AG04450 (cell line): ENCODE measurements at regions of chr4 and their contacts with region 1.

Region 1: DNA sequence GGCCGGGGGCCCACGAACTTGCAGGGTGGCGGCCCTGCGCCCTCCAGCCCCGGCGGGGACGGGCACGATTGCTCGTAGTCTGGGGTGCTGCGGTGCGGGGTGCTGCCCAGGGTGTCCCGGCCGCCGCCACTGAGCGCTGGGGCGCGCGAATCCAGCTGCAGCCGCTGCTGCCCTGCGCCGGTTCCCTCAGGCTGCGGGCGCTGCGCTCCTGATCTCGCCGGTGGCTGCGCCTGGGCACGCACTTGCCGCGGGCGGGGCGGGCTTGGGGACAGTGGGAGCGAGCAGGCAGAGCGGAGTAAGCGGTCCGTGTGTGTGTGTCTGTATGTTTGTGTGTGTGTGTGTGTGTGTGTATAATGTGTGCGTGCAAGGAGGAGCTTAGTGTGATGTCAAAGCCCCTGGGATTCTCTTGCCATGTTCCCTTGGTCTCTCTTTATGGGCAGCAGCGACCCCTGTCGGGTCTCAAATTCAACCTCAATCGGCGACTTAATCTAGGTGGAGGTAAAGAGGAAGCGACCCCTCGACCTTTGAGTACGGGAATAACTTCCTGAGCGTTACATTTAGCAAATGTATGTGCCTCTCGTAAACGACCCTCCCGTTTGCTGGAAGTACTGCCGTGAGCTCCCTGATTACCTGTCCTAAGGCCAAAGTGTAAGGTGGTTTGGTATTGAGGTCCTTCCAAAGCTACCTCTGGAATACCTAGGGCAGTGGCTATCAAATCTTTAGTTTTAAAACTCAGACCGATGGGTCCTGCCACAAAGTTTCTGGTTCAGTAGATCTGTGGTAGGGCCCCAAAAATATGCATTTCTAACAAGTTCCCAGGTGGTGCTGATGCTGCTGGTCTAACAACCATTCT is at the start of gene RNF150:
- DNase-seq: peak; percentile 78
- H3K4me3 ChIP-seq: peak within 1 kb of the TSS; percentile 82
- H3K27ac ChIP-seq: no peak within 1 kb of the TSS
- H3K27me3 ChIP-seq: no peaks in the 10 kb centered on the region
- CTCF ChIP-seq: peak; percentile 87
- polyA plus RNA-seq, gene RNF150: 9.8 and 10.3 TPM in 2 replicates

Region 2: GRCh38 chr4:140579278-140579677 is 554.1 kb before region 1 on chr4:
- CTCF ChIA-PET with region 1: no interaction called
- POLR2A ChIA-PET with region 1: no interaction called
- DNase-seq: no peak
- H3K4me3 ChIP-seq: no peak overlapping the region
- H3K27ac ChIP-seq: no peak overlapping the region
- H3K27me3 ChIP-seq: peaks cover 31% of the 10 kb centered on the region
- CTCF ChIP-seq: no peak

Region 3: DNA sequence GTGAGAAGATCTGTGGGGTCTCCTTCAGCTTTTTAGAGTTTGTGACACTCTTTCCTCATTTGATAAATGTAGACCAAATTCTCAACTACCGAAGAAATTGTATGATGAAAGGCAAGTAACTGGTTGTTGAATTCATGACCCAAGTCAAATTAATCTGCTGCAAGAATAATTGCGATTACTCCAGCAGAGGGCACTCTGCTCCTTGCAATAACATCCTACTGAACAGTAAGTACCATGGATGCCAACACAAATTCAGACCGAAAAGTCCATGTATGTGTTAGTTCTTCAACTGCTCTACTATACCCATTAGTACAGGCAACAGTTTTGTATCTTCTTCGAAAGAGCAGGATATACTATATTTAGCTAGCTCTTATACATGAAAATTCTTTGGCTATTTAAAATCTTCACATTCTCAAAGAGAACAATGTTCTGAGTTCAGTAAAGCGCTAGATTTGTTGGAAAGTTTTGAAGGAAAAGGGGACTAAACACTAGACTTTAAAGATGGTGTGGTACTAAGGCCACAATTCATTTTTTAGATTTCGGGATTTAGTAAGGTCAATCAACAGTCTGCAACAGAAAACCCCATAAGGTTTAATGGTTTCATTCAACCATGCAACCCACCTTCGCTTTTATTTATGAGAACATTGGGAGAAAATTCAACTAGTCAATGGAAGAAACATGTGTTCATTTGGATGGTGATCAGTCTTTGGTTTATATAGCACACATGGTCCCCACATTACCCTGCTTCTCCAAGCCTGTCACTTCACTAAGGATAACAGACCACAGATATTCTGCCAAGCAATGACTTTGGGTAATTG is 271.8 kb before region 1 on chr4:
- CTCF ChIA-PET with region 1: interaction called, 171 read pairs
- POLR2A ChIA-PET with region 1: interaction called, 3 read pairs
- DNase-seq: peak; percentile 80
- H3K4me3 ChIP-seq: no peak overlapping the region
- H3K27ac ChIP-seq: no peak overlapping the region
- H3K27me3 ChIP-seq: no peaks in the 10 kb centered on the region
- CTCF ChIP-seq: peak; percentile 82

Region 4: DNA sequence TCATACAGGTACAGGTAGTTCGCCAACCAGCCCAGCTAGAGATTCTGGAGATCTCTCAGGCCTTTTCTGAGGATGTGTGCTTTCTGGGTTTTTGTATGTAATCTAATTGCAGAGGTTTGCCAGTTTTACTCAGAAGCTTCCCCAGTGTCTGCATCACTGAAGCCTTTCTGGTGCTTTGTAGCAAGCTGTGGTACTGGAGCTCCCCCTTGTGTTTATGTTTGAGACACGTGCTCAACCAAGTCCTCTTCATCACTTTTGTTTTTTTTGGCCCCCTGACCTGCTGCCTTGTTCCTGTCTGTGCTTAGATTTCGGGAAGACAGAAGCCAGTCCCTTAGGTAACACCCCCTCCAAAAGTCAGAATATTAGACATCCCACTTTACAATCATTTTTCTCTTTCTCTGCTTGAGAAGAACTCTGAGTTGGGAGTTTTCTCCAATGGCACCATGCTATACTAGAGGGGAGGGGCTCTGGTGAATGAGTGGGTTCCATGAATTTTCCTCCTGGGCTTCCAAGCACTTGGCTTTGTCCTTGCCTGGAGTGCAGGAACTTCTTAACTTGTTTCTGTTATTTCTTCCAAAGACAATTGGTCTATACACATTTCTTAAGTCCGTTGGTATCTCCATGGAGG is 248.8 kb before region 1 on chr4:
- CTCF ChIA-PET with region 1: interaction called, 47 read pairs
- POLR2A ChIA-PET with region 1: no interaction called
- DNase-seq: peak; percentile 34
- H3K4me3 ChIP-seq: no peak overlapping the region
- H3K27ac ChIP-seq: peak overlapping the region; percentile 21
- H3K27me3 ChIP-seq: no peaks in the 10 kb centered on the region
- CTCF ChIP-seq: peak; percentile 75

Region 5: DNA sequence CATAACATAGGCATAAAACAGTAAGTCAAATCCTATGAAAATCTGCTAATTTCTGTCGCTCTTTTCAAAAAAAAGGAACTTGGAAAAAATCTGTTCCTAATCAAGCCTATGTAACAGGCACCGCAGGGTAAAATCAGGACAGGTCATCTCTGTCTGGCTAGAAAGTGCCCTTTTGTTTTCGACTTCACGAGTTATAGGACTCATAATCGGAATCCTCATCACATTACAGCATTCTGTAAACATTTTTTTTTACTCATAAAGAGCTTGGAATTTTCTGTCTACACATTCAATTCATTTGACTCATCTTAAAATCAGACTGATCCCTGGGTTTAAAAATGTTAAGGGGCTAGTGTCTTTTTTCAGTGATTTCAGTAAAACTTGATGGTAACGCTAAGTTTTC is 195.5 kb before region 1 on chr4:
- CTCF ChIA-PET with region 1: interaction called, 20 read pairs
- POLR2A ChIA-PET with region 1: no interaction called
- DNase-seq: no peak
- H3K4me3 ChIP-seq: no peak overlapping the region
- H3K27ac ChIP-seq: no peak overlapping the region
- H3K27me3 ChIP-seq: no peaks in the 10 kb centered on the region
- CTCF ChIP-seq: no peak

Region 6: GRCh38 chr4:141002323-141002805 is 131.0 kb before region 1 on chr4:
- CTCF ChIA-PET with region 1: interaction called, 40 read pairs
- POLR2A ChIA-PET with region 1: interaction called, 6 read pairs
- DNase-seq: peak; percentile 43
- H3K4me3 ChIP-seq: no peak overlapping the region
- H3K27ac ChIP-seq: no peak overlapping the region
- H3K27me3 ChIP-seq: no peaks in the 10 kb centered on the region
- CTCF ChIP-seq: no peak